Right ventricle myocardium inferior (tissue), 1 donor: ENCODE measurements at regions of chr3 and their contacts with region 1.

Region 1: GRCh38 chr3:32502118-32502945 is at the start of gene CMTM6:
- DNase-seq: peak; percentile 92
- ATAC-seq: peak; percentile 96
- total RNA-seq, gene CMTM6: 11.3 TPM

Region 2: DNA sequence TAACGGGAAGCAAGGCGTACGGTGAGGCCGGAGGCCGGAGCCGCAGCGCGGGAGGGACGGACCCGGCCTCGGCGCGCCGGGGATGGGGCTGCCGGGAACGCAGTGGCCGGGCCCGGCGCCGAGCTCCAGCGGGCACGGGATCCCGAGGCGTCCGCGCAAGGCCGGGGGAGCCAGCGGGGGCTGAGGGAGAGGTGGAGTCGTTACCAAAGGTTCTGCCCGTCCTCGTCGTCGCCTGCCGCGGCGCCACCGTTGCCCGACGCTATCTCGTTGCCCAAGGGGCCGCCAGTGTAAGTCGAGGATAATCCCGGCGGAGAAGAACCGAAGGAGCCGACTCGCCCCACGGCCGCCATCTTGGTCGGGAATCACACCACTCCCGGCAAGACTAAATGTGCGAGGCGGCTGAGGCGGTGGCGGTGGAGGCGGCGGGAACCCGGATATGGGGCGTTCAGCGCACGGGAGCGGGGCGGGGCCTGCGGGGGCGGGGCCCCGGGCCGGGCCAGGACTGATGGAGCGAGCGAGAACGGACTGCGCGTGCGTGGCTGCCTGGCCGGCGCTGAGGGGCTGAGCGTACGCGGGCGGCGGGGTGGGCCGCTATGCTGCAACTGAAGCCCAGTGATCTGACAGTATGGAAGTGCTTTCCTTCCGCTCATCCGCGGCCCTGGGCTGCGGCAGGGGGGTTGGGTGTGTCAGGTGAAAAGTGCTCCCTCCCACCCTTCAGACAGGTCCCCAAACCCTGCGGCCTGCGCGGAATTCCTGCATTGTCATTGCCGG is 68.3 kb after region 1 on chr3 and contains the start of gene DYNC1LI1:
- intact Hi-C with region 1: loop called (anchors 5 kb)
- DNase-seq: peak; percentile 98
- ATAC-seq: peak; percentile 99
- total RNA-seq, gene DYNC1LI1: 53.6 TPM